RWPE1 (cell line): ENCODE measurements at regions of chr3 and their contacts with region 1.

Region 1: GRCh38 chr3:13648060-13649001 is 99.4 kb downstream of the FBLN2 start:
- DNase-seq: peak; percentile 83
- H3K27ac ChIP-seq: peak overlapping the region; percentile 94
- CTCF ChIP-seq: peak; percentile 97

Region 2: GRCh38 chr3:13308380-13308801 is 339.9 kb before region 1 on chr3:
- CTCF ChIA-PET with region 1: no interaction called
- POLR2A ChIA-PET with region 1: no interaction called
- DNase-seq: no peak
- H3K27ac ChIP-seq: no peak overlapping the region
- CTCF ChIP-seq: no peak

Region 3: GRCh38 chr3:13495921-13496723 is 152.2 kb before region 1 on chr3:
- CTCF ChIA-PET with region 1: interaction called, 54 read pairs
- POLR2A ChIA-PET with region 1: no interaction called
- DNase-seq: peak; percentile 53
- H3K27ac ChIP-seq: peak overlapping the region; percentile 91
- CTCF ChIP-seq: peak; percentile 92

Region 4: GRCh38 chr3:13658681-13659080 is 10.3 kb after region 1 on chr3:
- CTCF ChIA-PET with region 1: no interaction called
- POLR2A ChIA-PET with region 1: no interaction called
- DNase-seq: no peak
- H3K27ac ChIP-seq: no peak overlapping the region
- CTCF ChIP-seq: no peak